Naive thymus-derived CD4-positive, alpha-beta T cell (primary cell): ENCODE measurements at regions of chr17 and their contacts with region 1.

Region 1: GRCh38 chr17:76557368-76558197 is 17.7 kb downstream of the PRCD start:
- DNase-seq: peak; percentile 82 to 95 (median 92)
- ATAC-seq: peak; percentile 92
- H3K4me3 ChIP-seq: peak overlapping the region; percentile 77
- H3K4me3 Mint-ChIP-seq: peak overlapping the region; percentile 92 to 99 (median 98)
- H3K27ac ChIP-seq: peak overlapping the region; percentile 93
- H3K27ac Mint-ChIP-seq: peak overlapping the region; percentile 90 to 99 (median 96)
- H3K4me1 ChIP-seq: peaks cover 23 to 34% of the 10 kb centered on the region in 2 donors
- H3K4me1 Mint-ChIP-seq: peaks cover 25 to 66% (median 55%) of the 10 kb centered on the region in 7 donors
- H3K27me3 ChIP-seq: no peaks in the 10 kb centered on the region
- H3K27me3 Mint-ChIP-seq: no peaks in the 10 kb centered on the region

Region 2: GRCh38 chr17:75940724-75941441 is 616.7 kb before region 1 on chr17 and contains the start of gene FBF1:
- CTCF ChIA-PET with region 1: no interaction called
- POLR2A ChIA-PET with region 1: no interaction called
- intact Hi-C with region 1: loop called in 1 of 2 experiments (anchors 2 kb)
- DNase-seq: peak; percentile 74 to 92 (median 82)
- ATAC-seq: peak; percentile 100
- H3K4me3 ChIP-seq: peak within 1 kb of the TSS; percentile 89
- H3K4me3 Mint-ChIP-seq: peak within 1 kb of the TSS; percentile 77 to 93 (median 90)
- H3K27ac ChIP-seq: peak within 1 kb of the TSS; percentile 86
- H3K27ac Mint-ChIP-seq: peak within 1 kb of the TSS; percentile 74 to 94 (median 89)
- H3K4me1 ChIP-seq: peaks cover 5 to 11% of the 10 kb centered on the region in 2 donors
- H3K4me1 Mint-ChIP-seq: peaks cover 9 to 19% (median 11%) of the 10 kb centered on the region in 7 donors
- H3K27me3 ChIP-seq: no peaks in the 10 kb centered on the region
- H3K27me3 Mint-ChIP-seq: no peaks in the 10 kb centered on the region
- total RNA-seq, gene FBF1: 19.9 to 48.1 (median 29.0) TPM

Region 3: DNA sequence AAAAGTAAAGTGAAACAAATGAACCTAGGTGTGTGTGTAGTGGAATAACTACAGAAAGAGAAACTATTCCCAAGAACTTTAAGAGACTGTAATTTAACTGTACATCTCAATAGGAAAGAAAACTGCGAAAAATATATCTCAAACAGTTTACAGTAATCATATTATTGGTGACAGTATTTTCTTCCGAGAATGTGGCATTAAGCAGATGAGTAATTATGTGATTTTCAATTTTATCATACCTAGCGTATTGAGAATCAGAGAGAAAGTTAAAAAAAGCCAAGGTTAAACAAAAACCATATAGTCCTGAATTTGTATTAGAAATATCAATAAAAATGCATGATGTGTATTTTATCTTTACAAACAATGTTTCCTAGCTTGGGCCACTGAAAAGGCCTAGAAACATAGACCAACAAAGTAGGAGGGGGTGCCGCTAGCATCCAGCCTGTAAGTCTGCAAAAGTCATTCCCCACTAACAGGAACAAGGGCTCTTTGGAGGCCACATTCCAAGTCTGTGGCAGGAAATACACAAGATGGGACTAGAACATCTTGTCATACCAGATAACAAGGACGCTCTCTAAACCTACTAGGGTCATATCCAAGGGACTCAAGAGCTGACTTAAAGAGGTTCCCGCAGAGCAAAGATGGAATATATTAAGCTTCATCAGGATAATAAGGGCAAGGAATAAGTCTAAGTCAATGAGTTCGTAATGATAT is 337.8 kb before region 1 on chr17:
- CTCF ChIA-PET with region 1: no interaction called
- POLR2A ChIA-PET with region 1: no interaction called
- intact Hi-C with region 1: no loop called
- DNase-seq: no peak
- ATAC-seq: no peak
- H3K4me3 ChIP-seq: no peak overlapping the region
- H3K4me3 Mint-ChIP-seq: no peak overlapping the region
- H3K27ac ChIP-seq: no peak overlapping the region
- H3K27ac Mint-ChIP-seq: peak overlapping the region in 3 of 9 donors; percentile 36 to 67 (median 57)
- H3K4me1 ChIP-seq: peaks cover 0 to 10% of the 10 kb centered on the region in 2 donors
- H3K4me1 Mint-ChIP-seq: peaks cover 11 to 65% (median 54%) of the 10 kb centered on the region in 7 donors
- H3K27me3 ChIP-seq: no peaks in the 10 kb centered on the region
- H3K27me3 Mint-ChIP-seq: no peaks in the 10 kb centered on the region

Region 4: DNA sequence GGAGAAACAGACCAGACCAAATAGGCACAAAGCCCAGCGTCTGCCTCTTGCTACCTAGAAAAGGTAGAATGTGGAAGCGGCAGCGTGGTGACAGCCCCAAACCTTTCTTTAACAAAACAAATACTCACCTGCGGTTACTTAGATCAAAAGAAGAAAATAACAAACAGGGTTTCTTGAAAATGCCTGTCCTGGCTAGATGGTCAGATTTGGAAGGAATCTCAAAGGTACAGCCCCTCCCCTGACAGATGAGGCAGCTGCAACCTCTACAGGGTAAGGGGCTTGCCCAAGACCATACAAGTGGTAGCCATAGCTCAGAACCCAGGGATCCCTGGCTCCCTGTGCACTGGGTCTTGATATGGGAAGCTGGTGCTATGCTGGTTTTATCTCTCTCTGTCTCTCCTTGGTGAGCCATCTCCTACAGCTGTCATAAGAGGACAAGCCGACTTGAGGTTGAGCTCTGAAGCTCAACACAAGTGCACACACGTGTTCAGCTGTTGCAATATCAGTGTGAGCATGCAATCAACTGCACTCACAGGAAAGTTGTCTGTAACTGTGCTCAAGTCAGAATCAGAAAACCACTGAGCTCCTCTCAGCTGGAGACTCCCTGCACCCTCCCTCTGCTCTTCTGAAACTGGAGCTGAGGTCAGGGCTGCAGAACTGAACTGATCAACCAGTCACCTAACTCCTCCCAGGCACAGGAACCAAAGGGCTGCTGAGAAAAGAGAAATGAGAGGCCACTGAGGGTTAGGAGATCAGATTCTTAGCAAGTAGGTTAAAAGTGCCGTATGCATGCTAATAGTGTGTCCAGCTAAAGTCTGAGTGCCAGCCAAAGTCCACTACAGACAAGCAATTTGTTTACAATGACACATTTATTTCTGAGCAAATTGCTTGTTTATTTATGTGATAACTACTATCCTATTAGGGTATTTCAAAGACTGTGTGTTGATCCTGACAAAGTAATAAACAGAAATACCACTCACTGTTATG is 311.2 kb before region 1 on chr17:
- CTCF ChIA-PET with region 1: no interaction called
- POLR2A ChIA-PET with region 1: no interaction called
- intact Hi-C with region 1: no loop called
- DNase-seq: peak in 7 of 9 donors; percentile 43 to 75 (median 52)
- ATAC-seq: peak; percentile 92
- H3K4me3 ChIP-seq: peak overlapping the region; percentile 8
- H3K4me3 Mint-ChIP-seq: peak overlapping the region; percentile 60 to 84 (median 75)
- H3K27ac ChIP-seq: peak overlapping the region; percentile 61
- H3K27ac Mint-ChIP-seq: peak overlapping the region; percentile 84 to 96 (median 92)
- H3K4me1 ChIP-seq: peaks cover 17 to 56% of the 10 kb centered on the region in 2 donors
- H3K4me1 Mint-ChIP-seq: peaks cover 34 to 84% (median 68%) of the 10 kb centered on the region in 7 donors
- H3K27me3 ChIP-seq: no peaks in the 10 kb centered on the region
- H3K27me3 Mint-ChIP-seq: no peaks in the 10 kb centered on the region

Region 5: DNA sequence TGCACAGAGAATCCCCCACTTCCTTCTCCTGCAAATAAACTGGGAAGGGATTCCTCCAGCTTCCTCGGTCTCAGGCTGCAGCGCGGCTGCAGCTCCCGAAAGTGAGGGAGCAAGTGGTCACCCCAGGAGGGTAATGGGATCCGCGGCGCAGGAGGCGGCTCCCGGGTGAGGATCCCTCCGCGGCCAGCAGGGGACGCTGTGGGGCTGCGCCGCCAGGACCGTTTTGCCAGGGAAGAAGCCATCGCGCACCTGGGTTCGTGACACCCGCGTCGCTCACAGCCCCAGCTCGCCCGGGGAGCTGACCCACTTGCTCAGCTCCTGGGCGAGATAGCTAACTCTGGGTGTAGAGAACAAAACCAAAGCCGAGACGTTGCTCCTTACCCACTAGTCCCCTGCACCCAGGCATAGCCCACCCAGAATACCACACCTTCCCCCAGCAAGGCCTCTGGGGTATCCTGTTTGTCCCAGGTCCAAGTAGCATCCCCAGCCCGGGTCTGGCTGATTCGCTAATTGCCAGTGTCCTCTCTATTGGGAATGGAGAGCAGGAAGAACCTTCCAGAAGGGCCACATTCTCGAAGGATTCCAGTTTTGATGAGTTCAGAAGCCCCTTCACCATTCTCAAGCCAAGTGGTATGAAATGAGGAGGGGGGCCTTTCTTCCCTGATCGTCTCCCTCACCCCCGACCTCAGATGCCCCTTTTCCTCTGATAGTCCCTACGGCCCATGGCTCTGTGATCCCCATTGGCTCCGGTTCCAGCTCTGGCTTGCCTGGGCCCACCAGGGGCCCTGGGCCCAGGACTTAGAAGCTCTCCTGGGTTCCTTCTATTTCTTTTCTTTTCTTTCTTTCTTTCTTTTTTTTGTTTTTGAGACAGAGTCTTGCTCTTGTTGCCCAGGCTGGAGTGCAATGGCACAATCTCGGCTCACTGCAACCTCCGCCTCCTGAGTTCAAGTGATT is 34.2 kb before region 1 on chr17:
- CTCF ChIA-PET with region 1: interaction called, 7 read pairs
- POLR2A ChIA-PET with region 1: interaction called, 6 read pairs
- intact Hi-C with region 1: loop called in 1 of 2 experiments (anchors 2 kb)
- DNase-seq: peak; percentile 66 to 89 (median 79)
- ATAC-seq: peak; percentile 92
- H3K4me3 ChIP-seq: no peak overlapping the region
- H3K4me3 Mint-ChIP-seq: peak overlapping the region in 8 of 10 donors; percentile 10 to 71 (median 36)
- H3K27ac ChIP-seq: no peak overlapping the region
- H3K27ac Mint-ChIP-seq: peak overlapping the region in 8 of 9 donors; percentile 40 to 93 (median 72)
- H3K4me1 ChIP-seq: peaks cover 11 to 22% of the 10 kb centered on the region in 2 donors
- H3K4me1 Mint-ChIP-seq: peaks cover 16 to 31% (median 28%) of the 10 kb centered on the region in 7 donors
- H3K27me3 ChIP-seq: no peaks in the 10 kb centered on the region
- H3K27me3 Mint-ChIP-seq: peaks cover 0 to 11% (median 0%) of the 10 kb centered on the region in 5 donors

Region 6: DNA sequence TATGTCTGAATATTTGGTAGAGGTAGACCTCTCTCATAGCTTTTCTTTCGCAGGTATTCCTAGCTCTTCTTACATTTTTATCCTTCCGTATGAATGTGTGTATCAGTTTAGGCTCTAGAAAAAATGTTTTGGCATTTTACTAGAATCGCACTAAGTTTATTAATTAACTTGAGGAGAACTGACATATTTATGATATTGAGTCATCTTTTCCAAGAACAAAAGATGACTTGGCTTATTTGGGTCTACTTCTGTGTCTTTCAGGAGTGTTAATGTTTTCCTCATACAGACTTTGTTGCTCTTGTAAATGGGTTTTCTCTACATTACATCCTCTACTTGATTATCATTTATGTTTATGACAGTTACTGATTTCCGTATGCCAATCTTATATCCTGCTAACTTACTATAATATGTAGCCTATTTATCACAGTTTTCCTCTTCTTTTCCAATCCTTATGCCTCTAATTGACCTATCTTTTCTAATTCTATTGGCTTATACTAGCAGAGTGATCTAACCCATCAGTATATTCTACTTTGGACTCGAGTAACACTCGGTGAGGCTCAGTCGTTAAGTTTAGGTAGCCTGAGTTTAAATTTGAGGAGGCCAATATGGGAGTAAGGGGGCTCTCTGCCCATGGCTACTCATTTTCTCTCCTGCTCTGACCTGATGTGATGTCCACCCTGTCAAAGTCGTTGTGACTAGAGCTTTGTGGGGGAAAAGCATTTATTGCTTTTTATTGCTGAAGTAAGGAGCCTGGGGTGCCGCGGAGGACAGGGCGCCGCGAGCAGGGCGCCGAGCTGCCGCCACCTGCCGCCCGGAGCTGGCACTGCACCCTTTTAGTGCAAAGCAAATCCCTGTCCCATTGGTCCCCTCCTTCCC is 65.9 kb after region 1 on chr17:
- CTCF ChIA-PET with region 1: interaction called, 17 read pairs
- POLR2A ChIA-PET with region 1: no interaction called
- intact Hi-C with region 1: loop called (anchors 1 kb)
- DNase-seq: peak; percentile 46 to 78 (median 70)
- ATAC-seq: peak; percentile 98
- H3K4me3 ChIP-seq: no peak overlapping the region
- H3K4me3 Mint-ChIP-seq: peak overlapping the region in 1 of 10 donors; percentile 23
- H3K27ac ChIP-seq: no peak overlapping the region
- H3K27ac Mint-ChIP-seq: no peak overlapping the region
- H3K4me1 ChIP-seq: peaks cover 0 to 3% of the 10 kb centered on the region in 2 donors
- H3K4me1 Mint-ChIP-seq: peaks cover 0 to 8% (median 5%) of the 10 kb centered on the region in 7 donors
- H3K27me3 ChIP-seq: no peaks in the 10 kb centered on the region
- H3K27me3 Mint-ChIP-seq: peaks cover 0 to 23% (median 0%) of the 10 kb centered on the region in 5 donors

Region 7: DNA sequence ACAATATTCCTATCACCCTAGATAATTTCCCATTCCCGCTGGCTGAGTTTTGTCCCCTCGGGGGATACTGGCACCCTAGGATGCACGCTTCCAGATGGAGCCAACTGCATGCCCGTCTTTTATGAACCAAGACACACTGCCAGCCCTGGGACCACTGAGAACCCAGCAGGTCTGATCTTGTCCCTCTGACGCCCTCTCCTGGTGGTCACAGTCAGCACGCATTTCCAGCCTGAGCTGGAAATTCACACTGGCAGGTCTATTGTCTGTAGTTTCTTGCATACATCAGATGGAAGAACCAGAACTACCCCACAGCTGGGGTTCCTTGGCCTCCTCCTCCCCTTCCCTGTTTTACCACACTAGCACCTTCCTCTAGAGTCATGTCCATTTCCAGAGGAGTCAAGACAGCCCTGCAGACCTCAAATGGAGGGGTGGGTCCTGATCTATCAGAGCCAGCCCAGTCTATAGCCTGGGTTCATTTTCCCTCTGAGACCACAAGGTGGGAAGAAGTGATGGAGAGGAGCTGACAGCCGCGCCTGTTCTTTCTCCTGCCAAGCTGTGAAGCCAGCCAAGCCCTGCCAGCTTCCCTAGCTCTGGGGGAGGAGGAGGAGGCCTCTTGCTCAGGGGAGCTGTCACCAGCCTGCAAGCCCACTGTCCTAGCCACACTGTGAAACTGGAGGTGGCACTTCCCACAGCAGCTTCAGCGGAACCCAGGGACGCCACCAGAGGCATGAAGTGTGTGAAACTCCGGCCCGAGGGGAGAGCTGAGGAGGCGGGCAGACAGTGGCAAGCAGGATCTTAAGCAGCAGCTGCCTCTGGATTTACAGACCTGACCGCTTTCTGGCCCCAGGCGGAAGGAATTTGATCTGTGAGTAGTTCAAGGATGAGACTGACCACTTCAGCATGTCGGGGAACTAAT is 123.9 kb after region 1 on chr17:
- CTCF ChIA-PET with region 1: interaction called, 27 read pairs
- POLR2A ChIA-PET with region 1: interaction called, 6 read pairs
- intact Hi-C with region 1: loop called (anchors 1 kb)
- DNase-seq: peak; percentile 37 to 78 (median 67)
- ATAC-seq: peak; percentile 80
- H3K4me3 ChIP-seq: no peak overlapping the region
- H3K4me3 Mint-ChIP-seq: no peak overlapping the region
- H3K27ac ChIP-seq: no peak overlapping the region
- H3K27ac Mint-ChIP-seq: peak overlapping the region in 4 of 9 donors; percentile 18 to 74 (median 28)
- H3K4me1 ChIP-seq: peaks cover 14 to 25% of the 10 kb centered on the region in 2 donors
- H3K4me1 Mint-ChIP-seq: peaks cover 0 to 12% (median 5%) of the 10 kb centered on the region in 7 donors
- H3K27me3 ChIP-seq: no peaks in the 10 kb centered on the region
- H3K27me3 Mint-ChIP-seq: peaks cover 0 to 6% (median 0%) of the 10 kb centered on the region in 5 donors